ENCODE measurements at regions of chr13 and their contacts with region 1.

Region 1: GRCh38 chr13:75219479-75220237 is 262.3 kb downstream of the TBC1D4 start:
- DNase-seq: peak; percentile 73 to 90
- H3K4me3 ChIP-seq: no peak overlapping the region
- H3K4me3 Mint-ChIP-seq: peak overlapping the region; percentile 23
- H3K27ac Mint-ChIP-seq: no peak overlapping the region
- H3K4me1 ChIP-seq: no peaks in the 10 kb centered on the region; the same call in 1 of the 2 replicates
- H3K4me1 Mint-ChIP-seq: no peaks in the 10 kb centered on the region
- H3K27me3 ChIP-seq: no peaks in the 10 kb centered on the region
- H3K27me3 Mint-ChIP-seq: peaks cover 16% of the 10 kb centered on the region
- CTCF ChIP-seq: peak; percentile 90 to 98

Region 2: GRCh38 chr13:73722120-73722519 is 1497.5 kb before region 1 on chr13:
- CTCF ChIA-PET with region 1: no interaction called
- POLR2A ChIA-PET with region 1: no interaction called
- intact Hi-C with region 1: loop called (anchors 1 kb)
- DNase-seq: peak in 1 of 2 experiments; percentile 18
- H3K4me3 ChIP-seq: no peak overlapping the region
- H3K4me3 Mint-ChIP-seq: no peak overlapping the region
- H3K27ac Mint-ChIP-seq: no peak overlapping the region
- H3K4me1 ChIP-seq: no peaks in the 10 kb centered on the region
- H3K4me1 Mint-ChIP-seq: no peaks in the 10 kb centered on the region
- H3K27me3 ChIP-seq: no peaks in the 10 kb centered on the region
- H3K27me3 Mint-ChIP-seq: no peaks in the 10 kb centered on the region
- CTCF ChIP-seq: peak; percentile 14 to 39

Region 3: GRCh38 chr13:74683411-74683810 is 536.2 kb before region 1 on chr13:
- CTCF ChIA-PET with region 1: no interaction called
- POLR2A ChIA-PET with region 1: no interaction called
- intact Hi-C with region 1: loop called (anchors 1 kb)
- DNase-seq: peak in 1 of 2 experiments; percentile 19
- H3K4me3 ChIP-seq: no peak overlapping the region
- H3K4me3 Mint-ChIP-seq: no peak overlapping the region
- H3K27ac Mint-ChIP-seq: no peak overlapping the region
- H3K4me1 ChIP-seq: no peaks in the 10 kb centered on the region
- H3K4me1 Mint-ChIP-seq: no peaks in the 10 kb centered on the region
- H3K27me3 ChIP-seq: no peaks in the 10 kb centered on the region; the same call in 1 of the 2 replicates
- H3K27me3 Mint-ChIP-seq: peaks cover 10% of the 10 kb centered on the region
- CTCF ChIP-seq: peak in 1 of 2 experiments; percentile 51

Region 4: DNA sequence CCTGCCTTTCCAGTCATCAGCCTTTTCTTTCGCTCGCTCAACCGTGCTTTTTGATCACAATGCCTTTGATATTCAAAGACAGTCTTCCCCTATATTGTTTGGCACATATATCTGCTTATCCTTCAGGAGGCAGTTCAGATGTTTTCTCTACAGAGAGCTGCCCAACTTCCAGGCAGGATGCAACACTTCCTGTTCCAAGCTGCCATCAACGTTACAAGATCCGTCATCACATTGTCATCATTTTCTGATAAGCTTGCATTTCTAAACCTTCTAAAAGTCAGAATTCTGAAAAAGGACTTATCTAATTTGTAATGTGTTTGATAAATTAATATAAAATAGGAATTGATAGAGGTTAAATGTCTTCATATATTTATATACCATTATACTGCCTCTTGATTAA is 311.9 kb before region 1 on chr13:
- CTCF ChIA-PET with region 1: no interaction called
- POLR2A ChIA-PET with region 1: no interaction called
- intact Hi-C with region 1: loop called (anchors 10 kb)
- DNase-seq: no peak
- H3K4me3 ChIP-seq: no peak overlapping the region
- H3K4me3 Mint-ChIP-seq: no peak overlapping the region
- H3K27ac Mint-ChIP-seq: no peak overlapping the region
- H3K4me1 ChIP-seq: no peaks in the 10 kb centered on the region
- H3K4me1 Mint-ChIP-seq: no peaks in the 10 kb centered on the region
- H3K27me3 ChIP-seq: no peaks in the 10 kb centered on the region; the same call in 1 of the 2 replicates
- H3K27me3 Mint-ChIP-seq: peaks cover 3% of the 10 kb centered on the region
- CTCF ChIP-seq: no peak

Region 5: DNA sequence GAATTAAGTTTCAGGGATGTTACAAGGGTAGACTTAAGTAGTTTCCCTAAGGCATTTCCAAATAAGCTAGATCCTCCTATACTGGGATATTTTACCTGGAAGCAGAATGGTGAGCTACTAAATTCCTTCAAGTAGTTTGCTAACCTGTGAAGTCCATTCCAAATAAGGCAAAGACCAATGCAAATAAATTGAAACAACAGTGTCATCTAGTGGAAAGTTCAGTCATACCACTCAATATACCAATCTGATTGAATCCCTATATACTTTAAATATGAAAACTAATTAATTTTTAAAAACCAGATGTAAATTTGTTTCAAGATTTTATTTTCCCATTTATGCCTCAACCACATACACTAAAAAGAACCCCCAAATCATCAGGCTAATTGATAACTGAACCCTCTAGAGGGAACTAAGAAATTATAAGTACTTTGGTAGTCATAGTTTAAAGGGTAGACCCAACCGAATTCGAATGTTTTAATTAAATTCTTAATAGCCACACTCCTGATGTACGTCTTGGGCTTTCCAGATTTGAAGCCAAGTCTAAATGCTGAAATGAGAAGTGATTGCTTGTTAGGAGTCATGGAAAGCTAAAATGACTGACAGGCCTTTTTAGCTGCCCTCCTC is 38.6 kb after region 1 on chr13:
- CTCF ChIA-PET with region 1: interaction called, 8 read pairs
- POLR2A ChIA-PET with region 1: no interaction called
- intact Hi-C with region 1: loop called (anchors 1 kb)
- DNase-seq: peak in 1 of 2 experiments; percentile 43
- H3K4me3 ChIP-seq: no peak overlapping the region
- H3K4me3 Mint-ChIP-seq: no peak overlapping the region
- H3K27ac Mint-ChIP-seq: no peak overlapping the region
- H3K4me1 ChIP-seq: peaks cover 22% of the 10 kb centered on the region; the same call in 1 of the 2 replicates
- H3K4me1 Mint-ChIP-seq: peaks cover 24% of the 10 kb centered on the region
- H3K27me3 ChIP-seq: no peaks in the 10 kb centered on the region
- H3K27me3 Mint-ChIP-seq: no peaks in the 10 kb centered on the region
- CTCF ChIP-seq: peak; percentile 73 to 75

Region 6: GRCh38 chr13:75549262-75550158 is 329.9 kb after region 1 on chr13 and contains the start of gene UCHL3:
- CTCF ChIA-PET with region 1: no interaction called
- POLR2A ChIA-PET with region 1: no interaction called
- intact Hi-C with region 1: loop called (anchors 5 kb)
- DNase-seq: peak; percentile 97 to 99
- H3K4me3 ChIP-seq: peak within 1 kb of the TSS; percentile 85
- H3K4me3 Mint-ChIP-seq: peak within 1 kb of the TSS; percentile 91
- H3K27ac Mint-ChIP-seq: peak within 1 kb of the TSS; percentile 85
- H3K4me1 ChIP-seq: peaks cover 9% of the 10 kb centered on the region; the same call in 1 of the 2 replicates
- H3K4me1 Mint-ChIP-seq: peaks cover 38% of the 10 kb centered on the region
- H3K27me3 ChIP-seq: no peaks in the 10 kb centered on the region
- H3K27me3 Mint-ChIP-seq: no peaks in the 10 kb centered on the region
- CTCF ChIP-seq: peak; percentile 90 to 99
- total RNA-seq, gene UCHL3: 113 and 122 TPM in 2 replicates